SK-N-SH (cell line): ENCODE measurements at regions of chr1 and their contacts with region 1.

Region 1: DNA sequence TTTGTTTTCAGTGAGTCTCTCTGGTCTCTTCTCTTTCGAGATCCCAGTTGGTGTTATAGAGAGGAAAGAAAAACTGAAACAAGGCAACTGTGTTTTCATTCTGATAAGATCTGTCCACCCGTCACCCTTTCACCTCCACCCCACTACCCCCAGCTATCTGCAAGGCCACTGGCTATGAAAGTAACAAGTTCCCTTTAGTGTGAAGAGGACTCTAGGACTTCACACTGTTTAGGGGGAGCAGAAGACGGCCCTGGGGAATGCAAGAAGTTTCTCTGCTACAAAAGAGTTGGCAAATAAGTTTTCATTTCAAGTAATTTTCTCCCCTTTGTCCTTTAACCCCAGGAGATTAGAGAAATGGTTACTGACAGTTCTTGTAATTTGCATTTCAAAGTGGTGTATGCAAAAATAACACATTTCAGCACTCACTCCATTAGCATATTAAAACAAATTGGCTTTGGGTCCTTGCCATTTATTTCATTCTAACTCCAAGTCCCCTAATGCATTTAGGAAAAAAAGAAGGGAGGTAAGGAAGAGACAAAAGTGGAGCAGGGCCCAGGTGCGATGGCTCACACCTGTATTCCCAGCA is 79.6 kb upstream of the PPM1J start:
- DNase-seq: no peak
- H3K4me3 ChIP-seq: no peak overlapping the region
- H3K27ac ChIP-seq: no peak overlapping the region
- H3K4me1 ChIP-seq: peaks cover 0 to 19% of the 10 kb centered on the region in 2 experiments; a peak in 3 of 4 replicates
- H3K27me3 ChIP-seq: no peaks in the 10 kb centered on the region
- CTCF ChIP-seq: no peak
- EP300 ChIP-seq: no peak
- RAD21 ChIP-seq: no peak

Region 2: DNA sequence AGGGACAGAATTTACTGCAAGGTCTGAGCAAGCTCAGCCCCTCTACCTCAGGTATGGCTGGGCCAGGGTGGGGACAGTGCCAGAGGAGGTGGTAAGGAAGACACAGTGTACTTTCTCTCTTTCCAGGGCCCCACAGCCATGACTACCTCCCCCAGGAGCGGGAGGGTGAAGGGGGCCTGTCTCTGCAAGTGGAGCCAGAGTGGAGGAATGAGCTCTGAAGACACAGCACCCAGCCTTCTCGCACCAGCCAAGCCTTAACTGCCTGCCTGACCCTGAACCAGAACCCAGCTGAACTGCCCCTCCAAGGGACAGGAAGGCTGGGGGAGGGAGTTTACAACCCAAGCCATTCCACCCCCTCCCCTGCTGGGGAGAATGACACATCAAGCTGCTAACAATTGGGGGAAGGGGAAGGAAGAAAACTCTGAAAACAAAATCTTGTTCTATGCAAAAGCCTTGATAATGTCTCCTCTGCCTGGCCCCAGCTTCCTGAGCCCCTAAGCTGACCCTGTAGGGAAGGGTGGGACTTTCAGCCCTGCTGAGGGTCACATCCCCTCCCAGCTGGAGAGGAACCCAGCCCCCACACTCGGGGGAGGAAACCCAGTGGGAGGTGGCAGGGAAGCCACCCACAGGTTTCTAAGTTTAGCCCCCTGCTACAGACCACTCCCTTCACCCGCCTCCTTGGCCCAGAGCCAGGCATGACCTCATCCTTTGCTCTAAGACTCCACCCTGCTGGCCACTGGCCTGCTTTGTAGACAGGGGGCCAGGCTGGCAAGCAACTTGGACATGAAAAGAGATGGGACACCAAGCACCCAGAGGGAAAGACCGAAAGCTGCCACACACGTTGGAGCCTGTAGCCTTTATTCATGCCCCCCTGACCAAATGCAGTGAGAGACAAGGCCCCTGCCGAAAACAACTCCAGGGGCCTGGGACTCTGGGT is 94.2 kb before region 1 on chr1:
- CTCF ChIA-PET with region 1: no interaction called
- POLR2A ChIA-PET with region 1: no interaction called
- DNase-seq: peak; percentile 87
- H3K4me3 ChIP-seq: 0 out of 4 replicates have a peak overlapping the region, but pooled peaks of 1 of the 2 experiments have one; percentile 18
- H3K27ac ChIP-seq: peak overlapping the region; percentile 70 to 90
- H3K4me1 ChIP-seq: peaks cover 36 to 54% of the 10 kb centered on the region in 2 experiments; a peak in 3 of 4 replicates
- H3K27me3 ChIP-seq: no peaks in the 10 kb centered on the region
- CTCF ChIP-seq: peak; percentile 16; the same call in 1 of the 2 replicates
- EP300 ChIP-seq: peak in 1 of 2 experiments; percentile 42; a peak in 1 of 4 replicates
- RAD21 ChIP-seq: no peak

Region 3: DNA sequence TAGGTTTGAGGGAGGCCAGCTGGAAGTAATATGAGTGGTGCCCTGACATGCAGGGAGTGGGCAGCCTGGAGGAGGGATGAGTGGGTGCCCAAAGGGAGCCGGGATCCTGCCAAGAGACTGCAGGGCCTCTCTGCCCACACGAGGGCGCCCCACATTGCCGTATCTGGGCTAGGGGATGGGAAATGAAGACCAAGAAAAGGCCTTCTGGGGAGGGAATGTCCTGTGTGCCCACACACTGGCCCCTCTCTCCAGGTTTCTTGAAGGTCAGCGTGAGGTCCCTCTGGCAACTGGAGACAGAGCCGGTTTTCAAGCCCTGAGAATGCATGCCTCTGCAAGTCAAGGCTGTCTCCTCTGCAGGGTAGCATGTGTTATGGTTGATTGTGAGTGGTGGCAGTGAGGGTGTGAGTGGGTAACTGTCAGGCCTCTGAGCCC is 14.5 kb after region 1 on chr1:
- CTCF ChIA-PET with region 1: interaction called, 69 read pairs
- POLR2A ChIA-PET with region 1: no interaction called
- DNase-seq: peak; percentile 82
- H3K4me3 ChIP-seq: no peak overlapping the region; a peak in 1 of 4 replicates
- H3K27ac ChIP-seq: no peak overlapping the region
- H3K4me1 ChIP-seq: no peaks in the 10 kb centered on the region
- H3K27me3 ChIP-seq: no peaks in the 10 kb centered on the region
- CTCF ChIP-seq: peak; percentile 96
- EP300 ChIP-seq: no peak
- RAD21 ChIP-seq: peak; percentile 81